ENCODE measurements at regions of chr7 and their contacts with region 1.

Region 1: DNA sequence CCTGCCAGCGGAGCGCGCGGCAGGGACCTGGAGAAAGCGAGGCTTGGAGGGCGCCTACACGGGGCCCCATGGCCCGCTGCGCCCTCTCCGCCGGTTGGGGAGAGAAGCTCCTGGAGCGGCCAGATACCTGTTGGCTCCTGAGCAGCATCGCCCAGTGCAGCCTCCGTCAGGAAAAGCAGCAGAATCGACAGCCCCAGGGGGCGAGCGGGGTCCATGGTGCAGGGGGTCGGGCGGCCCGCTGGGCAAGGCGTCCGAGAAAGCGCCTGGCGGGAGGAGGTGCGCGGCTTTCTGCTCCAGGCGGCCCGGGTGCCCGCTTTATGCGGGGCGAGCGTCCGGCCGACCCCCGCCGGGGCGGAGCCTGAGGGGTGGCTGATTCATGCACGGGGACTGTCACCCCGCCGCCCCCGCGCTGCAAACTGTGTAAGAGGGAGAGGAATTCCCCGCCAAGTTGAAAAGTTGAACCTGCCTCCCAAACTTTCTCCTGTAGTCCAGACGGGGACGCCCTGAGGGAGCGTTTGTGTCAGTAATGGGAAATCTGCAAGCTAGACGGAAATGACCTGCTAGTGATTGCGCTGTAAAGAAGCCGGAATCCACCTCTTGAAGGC is at the start of gene TFPI2:
- DNase-seq: peak; percentile 59
- ATAC-seq: peak; percentile 84
- H3K4me3 Mint-ChIP-seq: peak within 1 kb of the TSS; percentile 55
- H3K27ac Mint-ChIP-seq: no peak within 1 kb of the TSS
- H3K4me1 Mint-ChIP-seq: peaks cover 11% of the 10 kb centered on the region
- H3K27me3 Mint-ChIP-seq: peaks cover 38% of the 10 kb centered on the region
- CTCF ChIP-seq: no peak
- total RNA-seq, gene TFPI2: not detected

Region 2: DNA sequence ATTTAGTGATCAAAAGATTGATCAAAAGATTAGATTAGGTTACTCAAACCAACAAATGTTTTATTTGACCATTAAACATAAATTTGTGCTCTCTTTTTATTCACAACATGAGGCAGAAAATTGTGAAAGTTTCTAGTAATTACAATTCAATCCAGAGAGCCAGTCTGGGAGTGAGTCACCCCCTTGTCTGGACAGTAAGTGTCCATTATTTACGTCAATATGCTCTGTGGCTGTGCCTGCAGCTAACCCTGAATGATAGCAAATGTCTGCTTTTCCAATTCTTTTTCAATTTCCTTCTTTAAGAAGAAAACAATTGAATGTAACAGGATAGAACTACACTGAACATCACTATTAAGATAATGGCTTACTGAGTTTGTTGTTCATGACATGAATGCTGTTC is 58.9 kb after region 1 on chr7:
- CTCF ChIA-PET with region 1: no interaction called
- POLR2A ChIA-PET with region 1: no interaction called
- intact Hi-C with region 1: loop called (anchors 10 kb)
- DNase-seq: no peak
- ATAC-seq: no peak
- H3K4me3 Mint-ChIP-seq: no peak overlapping the region
- H3K27ac Mint-ChIP-seq: no peak overlapping the region
- H3K4me1 Mint-ChIP-seq: no peaks in the 10 kb centered on the region
- H3K27me3 Mint-ChIP-seq: peaks cover 4% of the 10 kb centered on the region
- CTCF ChIP-seq: no peak